Activated CD4-positive, alpha-beta memory T cell treated with anti-CD3 and anti-CD28 coated beads for 36 hours (primary cell): ENCODE measurements at regions of chr7 and their contacts with region 1.

Region 1: DNA sequence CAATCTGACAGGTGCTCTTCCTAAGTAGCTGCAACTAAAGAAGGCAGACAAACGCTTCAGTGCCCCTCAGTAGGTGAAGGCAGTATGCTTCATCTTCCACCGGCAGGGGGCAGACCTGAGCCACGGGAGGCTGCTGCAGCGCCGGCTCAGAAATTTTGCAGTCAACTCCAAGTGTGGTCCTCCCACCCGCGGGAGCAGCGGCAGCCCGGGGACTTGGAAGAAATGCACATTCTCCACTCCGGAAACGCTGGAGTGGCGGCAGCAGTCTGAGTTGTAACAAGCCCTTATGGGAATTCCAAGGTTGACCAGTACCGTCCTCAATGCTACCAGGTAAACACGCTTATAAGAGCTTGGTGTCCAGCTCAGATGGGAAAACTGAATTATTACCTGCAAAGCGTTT is 3.4 kb downstream of the IGFBP3 start:
- DNase-seq: peak; percentile 84
- H3K4me3 Mint-ChIP-seq: no peak overlapping the region
- H3K27ac Mint-ChIP-seq: no peak overlapping the region
- H3K4me1 Mint-ChIP-seq: peaks cover 16% of the 10 kb centered on the region
- H3K27me3 Mint-ChIP-seq: peaks cover 34% of the 10 kb centered on the region

Region 2: DNA sequence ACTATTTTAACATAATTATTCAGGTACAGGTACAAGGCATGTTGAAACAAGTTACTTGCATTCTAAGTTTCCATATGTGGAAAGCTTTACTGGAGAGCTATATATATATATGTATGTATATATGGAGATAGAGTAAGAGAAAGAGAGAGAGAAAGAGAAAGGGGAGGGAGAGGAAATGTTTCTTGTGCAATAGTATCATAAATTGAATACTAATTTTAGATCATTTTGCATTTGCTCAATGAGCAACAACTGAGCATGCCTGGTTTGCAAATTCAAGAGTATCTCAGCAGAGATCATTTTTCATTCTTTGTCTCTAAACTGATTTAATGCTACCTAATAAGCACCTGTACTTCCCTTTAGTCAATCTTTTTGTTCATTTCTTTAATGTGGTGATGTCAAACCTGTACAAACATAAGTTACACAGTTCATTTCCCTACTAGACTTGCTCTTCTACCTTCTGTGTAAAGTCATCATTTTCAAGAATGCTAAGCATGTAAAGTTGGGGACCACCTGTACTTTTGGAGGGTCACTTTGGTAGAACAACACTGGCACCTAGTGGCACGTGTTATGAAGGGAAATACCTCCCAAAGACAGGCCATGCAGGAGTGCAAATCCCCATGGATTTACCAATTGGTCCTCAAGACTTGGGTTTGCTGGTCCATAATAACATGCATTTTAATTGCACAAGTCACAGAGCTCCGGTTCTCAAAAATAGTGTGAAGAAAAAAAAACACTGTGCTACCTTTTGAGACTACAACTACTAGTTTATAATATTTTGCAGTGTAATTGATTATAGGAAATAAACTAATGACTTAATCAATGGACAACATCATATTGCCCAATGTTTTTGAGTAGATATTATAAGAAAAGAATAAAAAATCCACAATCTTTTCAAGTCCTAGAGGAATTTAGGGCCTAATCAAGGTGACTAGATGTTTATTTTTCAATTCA is 434.6 kb after region 1 on chr7:
- CTCF ChIA-PET with region 1: interaction called, 5 read pairs
- POLR2A ChIA-PET with region 1: no interaction called
- intact Hi-C with region 1: loop called (anchors 1 kb)
- DNase-seq: peak; percentile 22
- H3K4me3 Mint-ChIP-seq: no peak overlapping the region
- H3K27ac Mint-ChIP-seq: no peak overlapping the region
- H3K4me1 Mint-ChIP-seq: no peaks in the 10 kb centered on the region
- H3K27me3 Mint-ChIP-seq: no peaks in the 10 kb centered on the region

Region 3: GRCh38 chr7:47088329-47089067 is 1170.8 kb after region 1 on chr7:
- CTCF ChIA-PET with region 1: interaction called, 13 read pairs
- POLR2A ChIA-PET with region 1: no interaction called
- intact Hi-C with region 1: loop called (anchors 1 kb)
- DNase-seq: peak; percentile 30
- H3K4me3 Mint-ChIP-seq: no peak overlapping the region
- H3K27ac Mint-ChIP-seq: no peak overlapping the region
- H3K4me1 Mint-ChIP-seq: no peaks in the 10 kb centered on the region
- H3K27me3 Mint-ChIP-seq: peaks cover 2% of the 10 kb centered on the region